Calu3 (cell line): ENCODE measurements at regions of chr2 and their contacts with region 1.

Region 1: GRCh38 chr2:165015052-165015642 is 59.8 kb upstream of the SLC38A11 start:
- DNase-seq: peak; percentile 80
- H3K4me3 Mint-ChIP-seq: no peak overlapping the region
- H3K27ac Mint-ChIP-seq: no peak overlapping the region
- H3K4me1 Mint-ChIP-seq: peaks cover 9% of the 10 kb centered on the region
- H3K27me3 Mint-ChIP-seq: no peaks in the 10 kb centered on the region
- CTCF ChIP-seq: peak; percentile 88

Region 2: DNA sequence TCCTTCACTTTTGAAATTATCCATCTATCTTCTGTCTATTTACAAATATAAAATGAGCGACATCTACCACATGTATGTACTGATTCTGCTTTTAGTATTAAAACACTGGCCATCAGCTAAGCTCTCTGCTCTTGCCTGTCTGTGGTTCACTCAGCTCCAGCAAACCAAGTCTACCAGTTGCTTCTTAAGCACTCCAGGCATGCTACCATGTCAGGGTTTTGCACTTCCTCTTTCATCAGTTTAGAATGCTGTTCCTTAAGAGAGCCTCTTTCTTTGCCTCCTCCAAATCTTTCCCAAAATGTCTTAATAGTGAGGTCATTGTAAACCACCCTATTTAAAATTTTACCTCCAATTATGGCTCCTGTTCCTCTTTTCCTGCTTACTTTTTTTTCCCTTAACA is 129.2 kb after region 1 on chr2:
- CTCF ChIA-PET with region 1: no interaction called
- intact Hi-C with region 1: loop called (anchors 5 kb)
- DNase-seq: no peak
- H3K4me3 Mint-ChIP-seq: no peak overlapping the region
- H3K27ac Mint-ChIP-seq: no peak overlapping the region
- H3K4me1 Mint-ChIP-seq: peaks cover 6% of the 10 kb centered on the region
- H3K27me3 Mint-ChIP-seq: no peaks in the 10 kb centered on the region
- CTCF ChIP-seq: no peak

Region 3: DNA sequence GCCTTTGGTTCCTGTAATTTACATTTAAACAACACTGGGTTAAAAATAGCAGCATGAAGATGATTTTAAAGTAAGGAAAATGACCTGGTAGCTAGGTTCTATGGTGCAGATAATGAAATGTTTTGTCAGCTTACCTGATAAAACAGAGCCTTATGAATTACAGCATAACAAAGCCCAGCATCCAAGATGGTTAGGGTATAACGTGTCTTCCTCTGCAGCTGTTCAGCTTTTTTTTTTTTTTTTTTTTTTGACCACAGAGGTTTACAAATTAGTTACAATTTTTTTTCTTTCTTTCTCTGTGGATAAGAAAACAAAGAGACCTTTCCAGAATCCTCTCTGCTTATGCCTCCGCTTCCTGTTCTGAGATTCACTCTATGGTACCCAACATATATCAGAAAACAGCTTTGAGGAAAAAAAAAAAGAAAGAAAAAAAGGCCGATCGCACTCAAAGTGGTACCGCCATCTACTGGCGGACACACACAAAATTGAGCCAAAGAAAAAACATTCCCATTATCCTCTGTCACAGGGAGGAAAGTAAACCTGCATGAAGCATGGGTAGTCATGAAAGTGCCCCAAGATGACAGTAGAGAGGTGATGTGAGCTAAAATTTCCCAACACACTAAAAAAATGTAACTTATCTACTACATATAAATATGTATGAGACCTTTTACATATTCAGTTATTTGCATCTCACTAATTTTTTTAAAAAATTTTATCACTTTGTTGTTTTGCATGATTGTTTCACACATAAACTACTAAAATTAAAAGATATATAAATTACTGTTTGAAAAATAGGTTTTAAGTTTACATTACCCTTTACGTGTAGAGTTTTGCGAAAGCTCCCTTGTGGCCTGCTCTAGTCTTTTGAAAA is 188.8 kb after region 1 on chr2 and contains the start of gene SCN3A:
- CTCF ChIA-PET with region 1: interaction called, 26 read pairs
- intact Hi-C with region 1: loop called (anchors 1 kb)
- DNase-seq: peak; percentile 49
- H3K4me3 Mint-ChIP-seq: no peak within 1 kb of the TSS
- H3K27ac Mint-ChIP-seq: no peak within 1 kb of the TSS
- H3K4me1 Mint-ChIP-seq: peaks cover 12% of the 10 kb centered on the region
- H3K27me3 Mint-ChIP-seq: no peaks in the 10 kb centered on the region
- CTCF ChIP-seq: peak; percentile 61
- total RNA-seq, gene SCN3A: 0.09 and 1.3 TPM in 2 replicates

Region 4: DNA sequence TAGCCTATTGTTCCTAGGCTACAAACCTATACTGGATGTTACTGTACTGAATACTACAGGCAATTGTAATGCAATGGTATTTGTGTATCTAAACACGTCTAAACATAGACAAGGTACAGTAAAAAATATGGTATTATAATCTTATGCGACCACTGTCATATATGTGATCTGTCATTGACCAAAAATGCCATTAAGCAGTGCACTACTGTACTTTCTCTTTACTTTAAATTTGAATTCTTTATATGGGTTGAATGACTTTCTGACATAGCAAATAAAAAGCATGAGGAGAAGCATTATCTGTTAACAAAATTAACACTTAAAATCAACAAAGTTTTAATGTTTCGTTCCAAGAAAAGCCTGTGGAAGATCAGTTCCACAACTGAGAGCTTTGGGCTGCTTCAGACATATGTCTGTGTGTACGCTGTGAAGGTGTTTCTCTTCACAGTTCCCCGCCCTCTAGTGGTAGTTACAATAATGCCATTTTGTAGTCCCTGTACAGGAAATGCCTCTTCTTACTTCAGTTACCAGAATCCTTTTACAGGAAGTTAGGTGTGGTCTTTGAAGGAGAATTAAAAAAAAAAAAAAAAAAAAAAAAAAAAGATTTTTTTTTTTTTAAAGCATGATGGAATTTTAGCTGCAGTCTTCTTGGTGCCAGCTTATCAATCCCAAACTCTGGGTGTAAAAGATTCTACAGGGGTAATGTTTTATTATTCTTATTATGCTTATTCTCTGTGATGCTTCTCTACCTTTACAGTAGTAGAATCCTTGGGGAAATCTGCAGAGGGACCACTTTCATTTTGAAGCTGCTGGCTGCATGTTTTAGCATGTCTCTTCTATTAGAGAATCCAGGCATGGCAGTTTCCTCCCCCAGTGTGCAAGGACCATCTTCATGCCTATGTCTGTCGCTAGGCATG is 278.6 kb after region 1 on chr2:
- CTCF ChIA-PET with region 1: no interaction called
- intact Hi-C with region 1: loop called (anchors 5 kb)
- DNase-seq: peak; percentile 71
- H3K4me3 Mint-ChIP-seq: no peak overlapping the region
- H3K27ac Mint-ChIP-seq: no peak overlapping the region
- H3K4me1 Mint-ChIP-seq: no peaks in the 10 kb centered on the region
- H3K27me3 Mint-ChIP-seq: no peaks in the 10 kb centered on the region
- CTCF ChIP-seq: peak; percentile 48

Region 5: DNA sequence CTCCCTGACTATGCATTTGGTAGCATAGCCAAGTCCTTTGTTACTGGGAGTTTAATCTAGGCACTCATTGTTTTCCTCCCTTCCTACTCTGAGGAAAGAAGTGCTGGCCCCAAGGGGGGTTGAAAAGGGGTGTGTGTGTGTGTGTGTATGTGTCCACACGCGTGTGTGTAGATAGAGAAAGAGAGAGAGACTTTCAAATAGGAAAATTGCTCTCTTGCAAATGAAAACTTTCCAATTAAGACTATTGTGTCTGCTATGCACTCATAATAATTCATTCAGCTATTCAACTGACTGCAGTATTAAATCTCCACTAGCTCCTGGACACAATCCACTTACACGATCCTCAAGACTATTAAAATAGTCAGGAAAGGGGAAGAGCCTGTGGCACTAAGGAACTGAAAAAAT is 361.4 kb after region 1 on chr2:
- CTCF ChIA-PET with region 1: no interaction called
- intact Hi-C with region 1: loop called (anchors 10 kb)
- DNase-seq: no peak
- H3K4me3 Mint-ChIP-seq: no peak overlapping the region
- H3K27ac Mint-ChIP-seq: no peak overlapping the region
- H3K4me1 Mint-ChIP-seq: no peaks in the 10 kb centered on the region
- H3K27me3 Mint-ChIP-seq: no peaks in the 10 kb centered on the region
- CTCF ChIP-seq: no peak